Brain microvascular endothelial cell (primary cell): ENCODE measurements at regions of chr3 and their contacts with region 1.

Region 1: GRCh38 chr3:158659454-158660237 is 12.8 kb downstream of the LXN start:
- DNase-seq: peak; percentile 84
- H3K4me3 ChIP-seq: no peak overlapping the region
- H3K27ac ChIP-seq: peak overlapping the region; percentile 11
- H3K27me3 ChIP-seq: no peaks in the 10 kb centered on the region
- CTCF ChIP-seq: peak; percentile 88

Region 2: GRCh38 chr3:158789592-158789991 is 129.9 kb after region 1 on chr3:
- in situ Hi-C with region 1: loop called (anchors 10 kb)
- DNase-seq: peak; percentile 83
- H3K4me3 ChIP-seq: no peak overlapping the region
- H3K27ac ChIP-seq: peak overlapping the region; percentile 85
- H3K27me3 ChIP-seq: no peaks in the 10 kb centered on the region
- CTCF ChIP-seq: peak; percentile 70